Transverse colon (tissue), 4 donors: ENCODE measurements at regions of chr4 and their contacts with region 1.

Region 1: GRCh38 chr4:108840426-108840975 is 77.6 kb upstream of the ETNPPL start:
- DNase-seq: no peak
- H3K4me3 ChIP-seq: no peak overlapping the region
- H3K27ac ChIP-seq: no peak overlapping the region
- H3K4me1 ChIP-seq: no peaks in the 10 kb centered on the region
- H3K27me3 ChIP-seq: no peaks in the 10 kb centered on the region
- CTCF ChIP-seq: no peak
- EP300 ChIP-seq: no peak
- POLR2A ChIP-seq: no peak

Region 2: GRCh38 chr4:108024085-108024877 is 816.2 kb before region 1 on chr4:
- in situ Hi-C with region 1: no loop called
- intact Hi-C with region 1: loop called (anchors 5 kb)
- DNase-seq: no peak
- H3K4me3 ChIP-seq: no peak overlapping the region
- H3K27ac ChIP-seq: no peak overlapping the region
- H3K4me1 ChIP-seq: no peaks in the 10 kb centered on the region
- H3K27me3 ChIP-seq: no peaks in the 10 kb centered on the region
- CTCF ChIP-seq: no peak
- EP300 ChIP-seq: no peak
- POLR2A ChIP-seq: no peak

Region 3: DNA sequence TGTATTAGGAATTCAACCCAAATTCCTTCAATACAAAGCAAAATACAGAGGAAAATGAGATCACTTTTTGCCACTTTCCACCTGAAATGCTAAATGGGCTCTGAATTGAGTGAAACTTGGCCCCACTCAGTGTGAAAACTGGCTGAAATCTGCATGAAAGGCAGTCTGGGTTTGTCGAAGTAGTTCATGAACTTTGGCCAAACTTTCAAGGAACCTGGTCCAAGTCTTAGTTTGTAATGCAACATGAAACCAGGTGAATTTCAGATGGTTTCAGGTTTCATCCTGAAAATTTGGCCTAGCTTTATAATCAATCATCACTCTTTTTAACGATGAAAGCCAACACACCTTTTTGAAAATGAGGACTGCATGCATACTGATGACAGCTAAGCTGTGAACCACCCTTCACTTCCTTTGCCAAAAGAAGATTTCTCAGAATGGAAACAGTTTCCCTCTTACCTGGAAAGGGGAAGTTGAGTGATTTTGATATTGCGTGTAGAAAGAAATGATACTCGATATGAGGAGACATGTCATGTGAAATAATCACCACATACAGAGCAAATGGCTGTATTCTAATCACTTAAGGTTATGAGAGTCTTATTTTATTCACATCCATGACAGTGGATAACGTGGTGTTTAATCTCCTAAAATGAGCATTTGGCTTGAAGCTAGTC is 132.2 kb after region 1 on chr4:
- in situ Hi-C with region 1: no loop called
- intact Hi-C with region 1: no loop called
- DNase-seq: no peak
- H3K4me3 ChIP-seq: no peak overlapping the region
- H3K27ac ChIP-seq: no peak overlapping the region
- H3K4me1 ChIP-seq: no peaks in the 10 kb centered on the region
- H3K27me3 ChIP-seq: no peaks in the 10 kb centered on the region
- CTCF ChIP-seq: no peak
- EP300 ChIP-seq: no peak
- POLR2A ChIP-seq: no peak